Left ventricle myocardium superior (tissue), 1 donor: ENCODE measurements at regions of chr19 and their contacts with region 1.

Region 1: GRCh38 chr19:15629003-15629880 is 11.5 kb upstream of the CYP4F3 start:
- DNase-seq: peak; percentile 89
- ATAC-seq: peak; percentile 89

Region 2: GRCh38 chr19:15866631-15867030 is 237.4 kb after region 1 on chr19:
- intact Hi-C with region 1: loop called (anchors 2 kb)
- DNase-seq: no peak
- ATAC-seq: no peak